ENCODE measurements at regions of chr5 and their contacts with region 1.

Region 1: DNA sequence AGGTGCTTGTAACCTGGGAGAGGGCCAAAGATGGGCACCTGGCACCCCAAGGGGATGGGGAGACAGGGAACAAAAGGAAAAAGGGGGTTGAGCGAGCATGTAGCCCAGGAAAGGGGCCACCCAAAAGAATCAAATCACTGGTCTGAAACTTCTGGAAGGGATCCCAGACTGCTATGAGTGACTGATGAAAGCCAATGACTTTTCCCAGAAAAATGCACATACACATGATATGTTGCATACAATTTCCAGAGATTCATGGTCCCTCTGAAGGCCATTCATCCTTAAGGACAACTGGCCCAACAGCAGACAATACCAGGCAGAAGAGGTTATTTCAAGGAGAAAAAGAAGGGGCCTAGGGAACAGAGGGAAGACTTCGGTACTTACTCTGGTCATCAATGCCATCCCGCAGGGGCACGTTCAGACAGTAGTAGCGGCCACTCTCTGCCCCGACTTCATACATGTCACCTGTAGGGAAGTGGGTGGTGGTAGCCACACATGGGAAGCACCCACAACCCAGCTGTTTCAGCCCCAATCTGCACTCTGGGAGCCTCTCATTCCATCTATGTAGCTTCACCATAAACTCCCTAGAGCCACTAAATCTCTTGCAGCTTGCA is 8.4 kb downstream of the HDAC3 start:
- DNase-seq: no peak
- ATAC-seq: no peak
- H3K4me3 ChIP-seq: no peak overlapping the region
- H3K27ac ChIP-seq: no peak overlapping the region
- H3K4me1 ChIP-seq: peaks cover 0 to 17% (median 0%) of the 10 kb centered on the region in 9 donors
- H3K27me3 ChIP-seq: no peaks in the 10 kb centered on the region
- CTCF ChIP-seq: no peak

Region 2: GRCh38 chr5:141585594-141585993 is 42.7 kb before region 1 on chr5:
- intact Hi-C with region 1: loop called in 2 of 10 experiments (anchors 5 kb)
- DNase-seq: no peak
- ATAC-seq: no peak
- H3K4me3 ChIP-seq: no peak overlapping the region
- H3K27ac ChIP-seq: no peak overlapping the region
- H3K4me1 ChIP-seq: peaks cover 0 to 21% (median 0%) of the 10 kb centered on the region in 9 donors
- H3K27me3 ChIP-seq: no peaks in the 10 kb centered on the region
- CTCF ChIP-seq: no peak

Region 3: GRCh38 chr5:142000703-142001484 is 372.6 kb after region 1 on chr5:
- intact Hi-C with region 1: no loop called
- DNase-seq: no peak
- ATAC-seq: no peak
- H3K4me3 ChIP-seq: no peak overlapping the region
- H3K27ac ChIP-seq: peak overlapping the region in 2 of 10 donors; percentile 33 to 40
- H3K4me1 ChIP-seq: peaks cover 0 to 6% (median 0%) of the 10 kb centered on the region in 9 donors
- H3K27me3 ChIP-seq: no peaks in the 10 kb centered on the region
- CTCF ChIP-seq: peak in 6 of 9 donors; percentile 20 to 41 (median 35)